ENCODE measurements at regions of chrX and their contacts with region 1.

Region 1: DNA sequence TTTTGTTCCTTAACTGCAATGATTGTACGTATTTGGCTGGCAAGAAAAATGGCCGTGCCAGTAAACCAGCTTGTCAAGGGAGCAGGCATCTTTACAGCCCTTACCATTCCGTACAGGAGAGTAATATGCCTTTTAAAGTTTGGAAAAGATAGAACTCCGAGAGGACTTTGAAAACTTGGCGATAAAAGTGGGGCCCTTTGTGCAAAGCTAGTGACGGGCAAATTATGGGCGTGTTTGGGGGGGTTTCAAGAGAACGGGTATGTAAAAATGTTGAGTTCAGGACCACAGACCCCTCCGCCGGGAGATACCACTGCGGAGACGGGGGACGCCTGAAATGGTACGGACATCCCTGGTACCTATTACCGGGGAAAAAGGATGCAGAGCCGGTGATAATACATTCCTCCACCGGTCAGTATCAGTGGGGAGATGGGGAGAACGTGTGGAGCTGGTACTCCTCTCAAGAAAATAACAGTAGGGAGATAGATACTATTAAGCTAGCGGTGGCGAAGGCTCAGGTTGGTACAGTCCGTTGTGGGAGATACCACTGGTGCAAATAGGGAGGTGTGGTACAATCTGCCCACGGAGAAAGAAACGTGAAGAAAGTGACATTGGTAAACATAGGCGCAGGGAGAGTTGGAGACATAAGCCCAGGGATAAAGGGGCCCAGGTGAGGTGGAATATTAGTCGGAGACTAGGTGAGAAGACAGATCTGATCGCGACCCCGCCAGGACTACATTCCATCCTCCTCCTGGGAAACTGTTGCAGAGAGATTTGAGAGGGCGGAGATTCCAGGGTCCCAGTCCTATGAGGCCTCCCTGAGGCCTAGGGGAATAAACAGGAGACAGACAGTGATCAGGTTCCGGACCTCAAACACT is 14.5 kb downstream of the SPACA5 start:
- DNase-seq: peak; percentile 86
- H3K4me3 ChIP-seq: peak overlapping the region; percentile 55
- H3K27ac ChIP-seq: peak overlapping the region; percentile 99
- H3K4me1 ChIP-seq: no peaks in the 10 kb centered on the region
- H3K27me3 ChIP-seq: no peaks in the 10 kb centered on the region
- CTCF ChIP-seq: no peak

Region 2: GRCh38 chrX:47193475-47194193 is 827.6 kb before region 1 on chrX and contains the start of gene UBA1:
- CTCF ChIA-PET with region 1: no interaction called
- POLR2A ChIA-PET with region 1: no interaction called
- intact Hi-C with region 1: loop called (anchors 5 kb)
- DNase-seq: peak; percentile 99
- H3K4me3 ChIP-seq: peak within 1 kb of the TSS; percentile 96
- H3K27ac ChIP-seq: peak within 1 kb of the TSS; percentile 98
- H3K4me1 ChIP-seq: peaks cover 17% of the 10 kb centered on the region
- H3K27me3 ChIP-seq: no peaks in the 10 kb centered on the region
- CTCF ChIP-seq: peak; percentile 92
- total RNA-seq, gene UBA1: 413 and 437 TPM in 2 replicates

Region 3: DNA sequence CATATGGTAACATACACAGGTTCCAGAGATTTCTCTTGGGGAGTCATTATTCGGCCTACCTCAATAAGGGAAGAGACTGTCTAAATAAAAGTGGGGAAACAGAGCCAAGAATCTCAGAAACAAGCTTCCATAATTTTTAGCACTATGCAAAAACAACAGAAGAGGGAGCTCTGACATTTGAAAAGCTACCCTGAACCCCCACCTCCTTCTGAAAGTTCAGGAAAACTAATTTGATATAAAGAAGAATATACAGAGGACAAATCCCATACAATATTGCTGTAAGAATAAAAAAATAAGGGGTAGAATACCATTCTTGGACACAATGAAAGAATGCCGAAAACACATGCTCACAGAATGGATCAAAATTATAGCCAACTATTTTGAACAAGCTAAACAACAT is 524.0 kb before region 1 on chrX:
- CTCF ChIA-PET with region 1: no interaction called
- POLR2A ChIA-PET with region 1: no interaction called
- intact Hi-C with region 1: loop called (anchors 2 kb)
- DNase-seq: peak; percentile 24
- H3K4me3 ChIP-seq: no peak overlapping the region
- H3K27ac ChIP-seq: no peak overlapping the region
- H3K4me1 ChIP-seq: peaks cover 13% of the 10 kb centered on the region
- H3K27me3 ChIP-seq: no peaks in the 10 kb centered on the region
- CTCF ChIP-seq: peak; percentile 65

Region 4: GRCh38 chrX:47560831-47561652 is 460.2 kb before region 1 on chrX and contains the start of gene ARAF:
- CTCF ChIA-PET with region 1: no interaction called
- POLR2A ChIA-PET with region 1: no interaction called
- intact Hi-C with region 1: loop called (anchors 5 kb)
- DNase-seq: peak; percentile 99
- H3K4me3 ChIP-seq: peak within 1 kb of the TSS; percentile 69
- H3K27ac ChIP-seq: peak within 1 kb of the TSS; percentile 93
- H3K4me1 ChIP-seq: no peaks in the 10 kb centered on the region
- H3K27me3 ChIP-seq: no peaks in the 10 kb centered on the region
- CTCF ChIP-seq: no peak
- total RNA-seq, gene ARAF: 60.0 and 60.9 TPM in 2 replicates

Region 5: DNA sequence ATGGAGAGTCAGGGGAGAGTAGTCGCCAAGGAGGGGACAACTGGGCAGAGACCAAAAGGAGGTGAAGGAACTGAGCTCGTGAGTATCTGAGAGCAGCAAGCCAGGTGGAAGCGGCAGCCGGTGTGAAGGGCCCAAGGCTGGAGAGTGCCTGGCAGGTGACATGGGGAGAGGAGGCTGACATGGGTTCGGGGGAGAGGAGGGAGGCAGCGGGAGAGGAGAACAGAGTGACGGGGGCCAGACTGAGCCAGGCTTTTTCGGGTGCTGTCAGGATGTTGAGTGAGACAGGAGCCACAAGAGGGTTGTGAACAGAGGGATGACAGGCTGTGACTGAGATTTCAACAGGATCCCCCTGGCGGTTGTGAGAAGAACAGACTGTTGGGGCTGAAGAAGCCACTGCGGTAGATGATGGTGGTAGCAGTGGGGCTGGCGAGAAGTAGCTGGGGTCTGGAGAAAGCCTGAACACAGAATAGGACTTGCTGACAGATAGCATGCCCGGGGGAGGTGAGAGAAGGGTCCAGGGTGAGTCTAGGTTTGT is 376.6 kb before region 1 on chrX:
- CTCF ChIA-PET with region 1: no interaction called
- POLR2A ChIA-PET with region 1: no interaction called
- intact Hi-C with region 1: loop called (anchors 5 kb)
- DNase-seq: peak; percentile 71
- H3K4me3 ChIP-seq: no peak overlapping the region
- H3K27ac ChIP-seq: no peak overlapping the region
- H3K4me1 ChIP-seq: no peaks in the 10 kb centered on the region
- H3K27me3 ChIP-seq: no peaks in the 10 kb centered on the region
- CTCF ChIP-seq: peak; percentile 58

Region 6: DNA sequence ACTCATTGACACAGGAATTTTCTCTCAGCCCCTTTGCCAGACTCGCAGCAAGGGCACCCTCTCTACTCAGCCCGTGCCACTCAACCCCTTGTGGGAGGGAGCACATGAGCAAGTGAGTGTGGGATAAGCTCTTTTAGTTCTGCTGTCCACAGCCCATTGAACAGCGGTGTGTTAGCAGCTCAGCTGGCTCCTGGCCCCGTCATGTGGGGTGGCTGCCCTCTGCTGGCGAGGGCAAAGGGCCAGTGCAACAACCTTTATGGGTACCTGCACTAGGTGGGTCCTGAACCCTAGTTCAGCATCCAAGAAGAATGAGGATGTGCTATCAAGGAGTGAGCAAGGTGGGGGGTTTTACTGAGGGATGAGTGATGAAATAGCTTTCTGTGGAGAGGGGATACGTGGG is 269.6 kb before region 1 on chrX:
- CTCF ChIA-PET with region 1: no interaction called
- POLR2A ChIA-PET with region 1: no interaction called
- intact Hi-C with region 1: loop called (anchors 10 kb)
- DNase-seq: no peak
- H3K4me3 ChIP-seq: no peak overlapping the region
- H3K27ac ChIP-seq: no peak overlapping the region
- H3K4me1 ChIP-seq: peaks cover 4% of the 10 kb centered on the region
- H3K27me3 ChIP-seq: no peaks in the 10 kb centered on the region
- CTCF ChIP-seq: peak; percentile 36

Region 7: GRCh38 chrX:47836164-47837072 is 184.8 kb before region 1 on chrX and contains the start of gene ZNF81:
- CTCF ChIA-PET with region 1: no interaction called
- POLR2A ChIA-PET with region 1: no interaction called
- intact Hi-C with region 1: loop called (anchors 1 kb)
- DNase-seq: peak; percentile 96
- H3K4me3 ChIP-seq: peak within 1 kb of the TSS; percentile 53
- H3K27ac ChIP-seq: peak within 1 kb of the TSS; percentile 38
- H3K4me1 ChIP-seq: no peaks in the 10 kb centered on the region
- H3K27me3 ChIP-seq: no peaks in the 10 kb centered on the region
- CTCF ChIP-seq: no peak
- total RNA-seq, gene ZNF81: 11.2 and 12.3 TPM in 2 replicates

Region 8: DNA sequence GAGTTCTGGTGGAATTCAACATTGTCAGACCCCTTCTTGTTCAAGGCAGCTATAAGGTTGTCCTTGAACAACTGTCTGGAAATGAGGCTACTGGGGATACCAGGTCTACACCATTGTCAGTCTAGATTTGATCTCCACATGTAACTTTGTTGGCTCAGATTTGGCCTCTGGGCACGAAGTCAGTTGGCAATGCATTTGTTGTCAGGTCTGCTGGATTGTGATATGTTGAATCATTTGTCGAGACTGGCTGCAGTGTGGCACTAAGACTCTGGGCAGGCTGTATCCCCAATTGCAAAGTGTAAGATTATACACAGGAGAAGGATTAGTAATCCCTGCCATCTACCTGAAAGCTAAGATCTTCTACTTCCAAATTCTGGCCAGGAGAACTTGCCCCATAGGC is 158.1 kb before region 1 on chrX:
- CTCF ChIA-PET with region 1: no interaction called
- POLR2A ChIA-PET with region 1: no interaction called
- intact Hi-C with region 1: no loop called
- DNase-seq: no peak
- H3K4me3 ChIP-seq: no peak overlapping the region
- H3K27ac ChIP-seq: no peak overlapping the region
- H3K4me1 ChIP-seq: no peaks in the 10 kb centered on the region
- H3K27me3 ChIP-seq: no peaks in the 10 kb centered on the region
- CTCF ChIP-seq: no peak